Tibial artery (tissue), 4 donors: ENCODE measurements at regions of chr7 and their contacts with region 1.

Region 1: GRCh38 chr7:80392229-80393169 is 119.4 kb downstream of the GNAT3 start:
- DNase-seq: no peak
- H3K4me3 ChIP-seq: no peak overlapping the region
- H3K27ac ChIP-seq: no peak overlapping the region
- H3K4me1 ChIP-seq: no peaks in the 10 kb centered on the region
- H3K27me3 ChIP-seq: no peaks in the 10 kb centered on the region
- CTCF ChIP-seq: peak; percentile 58 to 68

Region 2: GRCh38 chr7:80060218-80060806 is 332.2 kb before region 1 on chr7:
- intact Hi-C with region 1: loop called (anchors 10 kb)
- DNase-seq: no peak
- H3K4me3 ChIP-seq: no peak overlapping the region
- H3K27ac ChIP-seq: no peak overlapping the region
- H3K4me1 ChIP-seq: no peaks in the 10 kb centered on the region
- H3K27me3 ChIP-seq: no peaks in the 10 kb centered on the region
- CTCF ChIP-seq: peak in 1 of 2 experiments; percentile 44

Region 3: DNA sequence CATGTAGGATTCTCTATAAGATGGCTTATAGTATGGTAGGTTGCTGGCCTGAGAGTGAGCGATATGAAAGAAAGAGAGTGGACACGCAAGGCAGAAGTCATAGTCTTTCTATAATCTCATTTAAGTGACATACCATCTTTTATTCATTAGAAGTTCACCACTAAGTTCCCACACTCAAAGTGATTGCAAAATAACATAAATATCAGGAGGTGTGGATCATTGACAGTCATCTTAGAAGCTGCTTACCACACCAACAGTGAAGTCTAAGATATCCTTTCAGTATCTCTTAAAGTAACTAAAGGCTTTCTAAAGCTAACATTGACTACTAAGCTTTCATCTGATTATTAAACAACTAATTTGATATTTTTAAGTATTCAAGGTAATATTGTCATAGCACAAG is 294.7 kb before region 1 on chr7:
- intact Hi-C with region 1: loop called (anchors 2 kb)
- DNase-seq: no peak
- H3K4me3 ChIP-seq: no peak overlapping the region
- H3K27ac ChIP-seq: no peak overlapping the region
- H3K4me1 ChIP-seq: no peaks in the 10 kb centered on the region
- H3K27me3 ChIP-seq: no peaks in the 10 kb centered on the region
- CTCF ChIP-seq: no peak

Region 4: GRCh38 chr7:80134536-80135320 is 257.8 kb before region 1 on chr7 and contains the start of gene GNAI1:
- intact Hi-C with region 1: loop called (anchors 10 kb)
- DNase-seq: peak; percentile 37 to 93
- H3K4me3 ChIP-seq: peak within 1 kb of the TSS; percentile 95 to 100
- H3K27ac ChIP-seq: peak within 1 kb of the TSS; percentile 97 to 98
- H3K4me1 ChIP-seq: peaks cover 0 to 41% (median 19%) of the 10 kb centered on the region in 4 donors
- H3K27me3 ChIP-seq: no peaks in the 10 kb centered on the region
- CTCF ChIP-seq: peak; percentile 23 to 30